Heart left ventricle (tissue), 16 donors: ENCODE measurements at regions of chr4 and their contacts with region 1.

Region 1: DNA sequence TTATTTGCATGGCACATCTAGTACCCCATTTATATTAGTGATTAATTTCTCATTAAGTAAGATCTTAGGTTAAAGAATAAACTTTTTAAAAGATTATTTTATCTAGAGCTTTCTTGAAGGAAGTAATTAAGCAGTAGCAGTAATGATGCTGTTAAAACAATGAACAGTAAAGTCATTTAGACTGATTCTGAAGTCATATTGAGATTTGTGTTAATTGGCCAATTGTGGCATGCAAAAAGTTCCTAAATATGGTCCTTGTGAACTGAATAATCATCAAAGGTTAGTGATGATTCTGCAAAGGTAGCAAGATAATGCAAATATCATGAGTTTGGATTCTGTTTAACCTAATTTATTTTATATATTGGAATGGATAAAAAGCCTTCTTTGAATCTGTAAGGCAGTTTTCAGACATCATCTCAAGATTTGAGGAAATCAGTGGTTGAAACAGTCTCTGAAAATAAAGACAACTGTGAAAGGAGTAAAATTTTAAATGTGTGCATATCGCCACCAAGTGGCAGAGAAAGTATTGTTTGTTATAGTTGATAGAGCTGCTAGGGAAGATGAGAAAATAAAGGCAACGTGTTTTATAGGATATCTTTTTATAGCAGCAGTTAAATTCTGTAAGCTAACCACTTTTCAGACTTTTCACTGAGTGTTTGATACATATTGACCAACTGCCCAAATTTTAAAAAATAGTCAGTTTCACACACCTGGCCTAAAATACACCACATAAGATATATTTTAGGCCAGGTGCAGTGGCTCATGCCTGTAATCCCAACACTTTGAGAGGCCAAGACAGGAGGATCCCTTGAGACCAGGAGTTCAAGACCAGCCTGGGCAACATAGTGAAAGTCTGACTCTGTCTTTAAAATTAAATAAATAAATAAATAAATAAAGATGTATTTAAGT is 79.6 kb downstream of the CCKAR start:
- DNase-seq: peak in 1 of 5 donors; percentile 30
- ATAC-seq: peak in 1 of 4 donors; percentile 66
- H3K4me3 ChIP-seq: no peak overlapping the region
- H3K27ac ChIP-seq: no peak overlapping the region
- H3K4me1 ChIP-seq: peaks cover 0 to 21% (median 16%) of the 10 kb centered on the region in 12 donors
- H3K27me3 ChIP-seq: no peaks in the 10 kb centered on the region
- CTCF ChIP-seq: peak; percentile 42 to 78 (median 70)
- POLR2A ChIP-seq: no peak

Region 2: DNA sequence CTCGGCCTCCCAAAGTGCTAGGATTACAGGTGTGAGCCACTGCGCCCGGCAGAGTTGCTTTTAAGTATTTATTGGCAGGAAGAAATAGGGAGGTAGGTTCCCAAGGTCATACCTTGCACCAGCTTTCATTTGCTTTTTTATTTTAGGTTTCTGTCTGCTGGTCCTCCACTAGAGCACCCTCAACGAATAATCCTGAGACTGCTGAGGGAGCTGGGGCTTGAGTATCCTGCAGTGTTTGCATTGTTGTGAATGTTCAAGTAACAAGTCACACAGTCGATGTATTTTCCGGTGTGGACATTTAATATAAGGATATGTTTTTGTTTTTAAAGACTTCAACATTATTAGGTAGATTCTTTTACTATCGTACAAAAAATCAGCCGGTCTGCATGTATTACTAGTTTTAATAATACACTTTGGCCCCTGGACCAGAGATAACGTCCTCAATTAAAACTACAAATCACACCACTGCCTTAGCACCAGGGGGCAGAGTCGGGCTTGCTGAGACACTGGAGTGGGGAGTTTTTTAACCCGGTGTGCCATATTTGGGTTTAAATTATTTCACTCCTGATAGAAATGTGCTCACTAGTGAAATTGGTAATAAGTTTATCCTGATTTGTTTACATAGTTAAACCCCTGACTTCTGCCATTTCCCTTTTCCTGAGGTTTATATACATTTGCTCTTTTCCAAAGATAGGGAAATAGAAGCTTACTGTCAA is 485.0 kb before region 1 on chr4:
- intact Hi-C with region 1: loop called in 4 of 10 experiments (anchors 5 to 10 kb)
- DNase-seq: peak in 3 of 5 donors; percentile 38 to 58 (median 44)
- ATAC-seq: peak in 1 of 4 donors; percentile 45
- H3K4me3 ChIP-seq: no peak overlapping the region
- H3K27ac ChIP-seq: no peak overlapping the region
- H3K4me1 ChIP-seq: peaks cover 0 to 52% (median 31%) of the 10 kb centered on the region in 12 donors
- H3K27me3 ChIP-seq: no peaks in the 10 kb centered on the region
- CTCF ChIP-seq: peak; percentile 28 to 66 (median 54)
- POLR2A ChIP-seq: no peak

Region 3: DNA sequence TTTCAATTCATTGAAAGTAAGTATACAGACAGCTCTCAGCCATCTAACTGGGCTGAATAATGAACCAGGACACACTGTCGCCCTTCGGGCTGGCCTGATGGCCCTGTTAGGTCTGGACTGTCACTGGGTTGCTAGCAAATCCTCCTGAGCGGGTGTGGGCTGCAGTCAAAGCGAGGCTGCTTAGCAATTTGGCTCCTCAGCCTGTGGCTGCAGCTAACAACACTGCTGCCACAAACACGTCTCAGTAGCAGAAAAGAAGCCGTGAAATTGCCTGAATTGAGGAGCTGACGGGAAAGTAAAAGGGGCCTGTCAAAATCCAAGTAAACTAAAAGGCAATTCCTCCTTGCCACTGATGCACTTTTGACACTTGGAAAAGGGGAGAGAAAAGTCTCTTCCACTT is 423.8 kb before region 1 on chr4:
- intact Hi-C with region 1: loop called in 8 of 10 experiments (anchors 2 to 10 kb)
- DNase-seq: peak in 1 of 5 donors; percentile 10
- ATAC-seq: no peak
- H3K4me3 ChIP-seq: no peak overlapping the region
- H3K27ac ChIP-seq: no peak overlapping the region
- H3K4me1 ChIP-seq: peaks cover 0 to 6% (median 0%) of the 10 kb centered on the region in 12 donors
- H3K27me3 ChIP-seq: no peaks in the 10 kb centered on the region
- CTCF ChIP-seq: no peak
- POLR2A ChIP-seq: no peak

Region 4: DNA sequence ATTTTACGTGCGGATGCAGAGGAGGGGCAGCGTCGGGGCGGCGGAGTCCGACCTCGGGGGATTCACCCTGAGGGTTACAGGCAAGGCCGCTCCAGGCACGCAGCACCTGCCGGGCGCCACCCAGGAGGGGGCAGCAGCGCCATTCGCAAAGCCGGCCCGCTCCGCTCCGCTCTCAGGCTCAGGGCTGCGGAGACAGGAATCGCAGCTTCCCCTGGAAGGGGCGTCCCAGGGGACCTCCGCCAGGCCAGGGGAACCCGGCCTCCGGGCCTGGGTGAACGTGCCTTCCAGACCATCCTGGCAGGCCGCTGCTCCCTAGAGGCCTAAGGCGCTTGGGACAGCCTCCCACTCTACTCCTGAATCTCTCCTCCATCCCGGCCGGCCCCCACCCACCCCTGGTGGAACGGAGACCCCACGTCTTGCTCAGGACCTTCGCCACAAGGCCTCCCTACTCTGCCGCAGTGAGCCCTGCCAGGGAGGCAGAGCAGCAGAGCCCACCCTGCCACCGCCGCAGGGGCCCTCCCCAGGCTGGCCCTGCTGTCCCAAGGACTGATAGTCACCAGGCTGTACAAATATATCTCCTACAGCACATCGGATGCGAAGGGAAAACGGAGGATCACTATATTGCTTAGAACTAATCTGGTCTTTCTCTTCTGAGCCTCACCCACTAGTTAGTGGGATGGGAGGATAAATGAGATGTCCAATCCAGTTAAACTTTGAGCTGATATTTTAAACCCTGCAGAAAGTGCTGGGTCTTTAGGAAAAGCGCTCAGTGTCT is 381.7 kb before region 1 on chr4:
- intact Hi-C with region 1: loop called in 5 of 10 experiments (anchors 5 to 10 kb)
- DNase-seq: peak; percentile 65 to 89 (median 74)
- ATAC-seq: peak; percentile 30 to 95 (median 94)
- H3K4me3 ChIP-seq: peak overlapping the region in 7 of 12 donors; percentile 12 to 35 (median 27)
- H3K27ac ChIP-seq: peak overlapping the region in 1 of 12 donors; percentile 25
- H3K4me1 ChIP-seq: peaks cover 0 to 37% (median 10%) of the 10 kb centered on the region in 12 donors
- H3K27me3 ChIP-seq: peaks cover 0 to 13% (median 0%) of the 10 kb centered on the region in 9 donors
- CTCF ChIP-seq: peak; percentile 60 to 80 (median 69)
- POLR2A ChIP-seq: no peak

Region 5: GRCh38 chr4:26330186-26330787 is 80.4 kb before region 1 on chr4:
- intact Hi-C with region 1: loop called (anchors 1 to 5 kb)
- DNase-seq: no peak
- ATAC-seq: peak in 3 of 4 donors; percentile 32 to 77 (median 69)
- H3K4me3 ChIP-seq: no peak overlapping the region
- H3K27ac ChIP-seq: no peak overlapping the region
- H3K4me1 ChIP-seq: peaks cover 0 to 54% (median 19%) of the 10 kb centered on the region in 12 donors
- H3K27me3 ChIP-seq: no peaks in the 10 kb centered on the region
- CTCF ChIP-seq: peak; percentile 53 to 78 (median 67)
- POLR2A ChIP-seq: no peak